SK-N-SH (cell line): ENCODE measurements at regions of chr5 and their contacts with region 1.

Region 1: DNA sequence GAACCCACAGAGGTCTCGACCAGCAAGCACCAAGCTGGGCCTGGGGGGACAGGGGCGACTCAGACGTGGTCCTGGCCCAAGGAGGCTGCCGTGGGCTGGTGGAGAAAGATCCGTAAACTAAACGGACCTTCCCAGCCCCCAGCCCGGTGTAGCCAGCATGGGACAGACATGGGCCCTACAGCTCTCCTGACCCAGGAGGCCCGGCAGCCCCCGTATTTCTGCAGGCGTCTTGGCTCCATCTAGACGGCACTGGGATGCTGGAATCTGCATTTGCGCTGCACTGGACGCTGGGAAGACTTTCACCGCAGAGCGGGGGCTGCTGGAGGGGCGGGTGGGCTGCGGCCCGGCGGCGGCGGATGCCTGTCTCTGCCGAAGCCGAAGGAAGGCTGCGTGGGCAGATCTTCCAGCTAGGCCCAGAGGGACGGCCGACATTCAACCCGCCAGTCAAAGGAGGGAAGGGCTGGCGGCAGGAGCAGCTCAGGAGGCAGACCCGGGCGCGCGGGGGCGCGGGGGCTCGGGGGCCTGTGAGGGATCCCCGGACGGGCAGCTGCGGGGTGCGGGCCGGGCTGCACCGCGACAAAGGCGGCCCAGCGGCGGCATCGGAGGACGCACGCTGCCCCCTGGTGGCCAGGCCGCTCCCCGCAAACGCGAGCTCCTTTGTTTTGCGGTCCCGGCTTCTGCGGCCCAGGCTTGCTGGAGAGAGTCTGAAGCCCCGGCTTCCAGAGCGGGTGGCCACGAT is 266.2 kb downstream of the NSG2 start:
- DNase-seq: peak; percentile 95
- H3K4me3 ChIP-seq: peak overlapping the region; percentile 39 to 62
- H3K27ac ChIP-seq: peak overlapping the region in 1 of 2 experiments; percentile 84; a peak in 2 of 4 replicates
- H3K4me1 ChIP-seq: peaks cover 0 to 38% of the 10 kb centered on the region in 2 experiments; a peak in 1 of 4 replicates
- H3K27me3 ChIP-seq: no peaks in the 10 kb centered on the region
- CTCF ChIP-seq: peak; percentile 77
- EP300 ChIP-seq: no peak; a peak in 1 of 4 replicates
- RAD21 ChIP-seq: peak; percentile 88

Region 2: DNA sequence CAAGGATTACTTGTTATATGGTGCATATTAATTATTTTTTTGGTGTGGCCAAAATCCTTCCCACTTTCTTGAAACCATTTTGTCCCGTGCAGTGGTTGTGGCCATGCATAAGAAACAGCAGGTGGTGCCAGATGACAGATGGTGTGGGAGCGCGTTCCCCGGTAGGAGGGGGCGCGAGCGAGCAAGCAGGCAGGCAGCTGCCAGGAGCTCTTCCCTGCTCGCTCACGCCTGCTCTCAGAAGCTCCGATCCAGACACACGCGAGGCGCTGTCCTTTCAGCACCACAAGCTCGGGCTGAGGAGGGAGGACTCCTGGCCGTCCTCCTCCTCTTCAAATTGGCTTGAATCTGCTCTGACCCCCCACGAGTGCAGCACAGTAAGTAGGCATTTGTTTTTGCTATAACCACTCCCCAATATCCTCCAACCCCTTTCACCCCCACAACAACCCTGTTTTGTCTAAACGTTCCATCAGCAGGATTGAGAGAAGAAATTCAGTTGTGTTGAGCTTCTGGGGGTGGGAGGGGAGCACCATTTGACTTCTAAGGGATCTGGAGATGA is 266.2 kb before region 1 on chr5 and contains the start of gene NSG2:
- CTCF ChIA-PET with region 1: interaction called, 298 read pairs
- POLR2A ChIA-PET with region 1: interaction called, 54 read pairs
- DNase-seq: peak; percentile 85
- H3K4me3 ChIP-seq: peak within 1 kb of the TSS in 1 of 2 experiments; percentile 47; a peak in 2 of 4 replicates
- H3K27ac ChIP-seq: peak within 1 kb of the TSS in 1 of 2 experiments; percentile 94; a peak in 2 of 4 replicates
- H3K4me1 ChIP-seq: peaks cover 0 to 18% of the 10 kb centered on the region in 2 experiments; a peak in 2 of 4 replicates
- H3K27me3 ChIP-seq: no peaks in the 10 kb centered on the region
- CTCF ChIP-seq: peak; percentile 89
- EP300 ChIP-seq: peak in 1 of 2 experiments; percentile 20; a peak in 1 of 4 replicates
- RAD21 ChIP-seq: peak; percentile 99
- polyA plus RNA-seq, gene NSG2: 4.3 and 10.7 TPM in 2 replicates

Region 3: DNA sequence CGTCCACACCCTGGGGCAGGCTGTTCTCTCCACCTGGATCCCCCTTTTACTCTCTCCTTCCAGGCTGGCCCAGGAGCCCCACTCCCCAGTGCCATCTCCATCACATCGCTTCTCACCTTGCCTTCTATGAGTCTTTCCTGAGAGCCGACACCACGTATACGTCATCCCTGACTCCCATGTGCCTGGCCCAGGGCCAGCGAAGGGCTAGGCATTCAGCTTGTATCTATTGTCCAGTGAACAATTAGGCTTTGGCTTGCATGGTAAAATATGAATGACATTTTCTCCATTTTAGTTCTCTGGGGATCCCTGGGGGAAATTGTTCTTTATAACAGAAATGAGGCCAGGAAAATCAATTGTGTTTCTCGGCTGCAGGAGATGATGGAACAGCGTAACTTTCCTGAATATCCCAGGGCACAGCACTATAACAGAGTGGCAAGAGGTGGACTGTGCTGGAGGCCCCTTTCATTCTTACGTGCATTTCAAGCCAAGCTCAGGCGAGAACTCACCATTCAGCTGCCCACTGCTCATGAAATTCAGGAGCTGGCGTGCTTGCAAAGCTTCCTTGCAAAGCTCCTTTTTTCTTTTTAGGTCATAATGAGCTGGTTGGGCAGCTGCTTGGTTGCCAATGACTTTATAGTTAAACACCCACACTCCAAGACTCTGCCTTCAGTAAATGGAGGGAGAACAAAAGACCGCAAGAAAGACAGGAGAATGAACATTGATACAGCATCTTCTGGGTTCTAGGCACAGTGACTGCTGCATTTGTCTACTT is 228.5 kb before region 1 on chr5:
- CTCF ChIA-PET with region 1: interaction called, 41 read pairs
- POLR2A ChIA-PET with region 1: interaction called, 8 read pairs
- DNase-seq: no peak
- H3K4me3 ChIP-seq: no peak overlapping the region
- H3K27ac ChIP-seq: peak overlapping the region; percentile 65 to 100; a peak in 3 of 4 replicates
- H3K4me1 ChIP-seq: peaks cover 22 to 49% of the 10 kb centered on the region in 2 experiments
- H3K27me3 ChIP-seq: no peaks in the 10 kb centered on the region
- CTCF ChIP-seq: no peak
- EP300 ChIP-seq: no peak
- RAD21 ChIP-seq: no peak

Region 4: GRCh38 chr5:174159327-174160247 is 152.1 kb before region 1 on chr5:
- CTCF ChIA-PET with region 1: interaction called, 12 read pairs
- POLR2A ChIA-PET with region 1: no interaction called
- DNase-seq: no peak
- H3K4me3 ChIP-seq: no peak overlapping the region
- H3K27ac ChIP-seq: no peak overlapping the region; a peak in 1 of 4 replicates
- H3K4me1 ChIP-seq: no peaks in the 10 kb centered on the region; a peak in 1 of 4 replicates
- H3K27me3 ChIP-seq: no peaks in the 10 kb centered on the region
- CTCF ChIP-seq: no peak
- EP300 ChIP-seq: no peak
- RAD21 ChIP-seq: no peak

Region 5: DNA sequence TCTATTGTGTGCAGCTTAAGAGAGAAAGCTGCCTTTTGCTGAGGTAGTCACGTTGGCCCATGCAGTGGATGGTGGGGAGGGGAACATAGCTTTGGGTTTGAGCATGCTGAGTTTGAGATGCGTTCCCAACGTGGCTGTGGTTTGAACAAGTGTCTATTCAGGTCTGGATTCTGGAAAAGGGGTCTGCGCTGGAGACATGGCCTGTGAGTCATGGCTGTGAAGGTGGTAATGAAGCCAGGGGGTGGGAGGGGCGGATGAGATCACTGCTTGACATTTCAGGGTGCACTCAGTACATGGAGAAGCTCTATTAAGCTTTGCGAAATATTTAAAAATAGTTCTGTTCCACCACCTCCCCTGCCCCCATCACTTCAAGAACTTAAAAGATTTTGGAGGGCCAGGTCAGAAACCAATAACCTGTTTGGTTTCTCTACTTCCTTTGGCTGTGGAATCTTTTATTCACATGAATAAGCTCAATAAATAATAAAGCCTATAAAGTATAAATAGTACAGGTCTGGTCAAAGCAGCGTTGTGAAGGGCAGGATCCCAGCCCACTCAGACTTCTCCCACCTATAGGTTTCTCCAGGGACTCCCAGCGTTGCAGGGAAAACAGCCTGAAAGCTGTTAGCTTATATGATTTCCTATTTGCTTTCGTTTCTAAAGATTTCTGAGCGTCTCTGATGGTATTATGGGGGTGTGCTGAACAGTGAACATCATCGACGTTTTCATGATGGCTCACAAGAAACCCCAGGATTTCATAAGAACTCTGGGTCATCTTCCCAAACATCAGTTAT is 76.3 kb before region 1 on chr5:
- CTCF ChIA-PET with region 1: interaction called, 29 read pairs
- POLR2A ChIA-PET with region 1: no interaction called
- DNase-seq: no peak
- H3K4me3 ChIP-seq: no peak overlapping the region
- H3K27ac ChIP-seq: peak overlapping the region in 1 of 2 experiments; percentile 95; a peak in 2 of 4 replicates
- H3K4me1 ChIP-seq: peaks cover 0 to 33% of the 10 kb centered on the region in 2 experiments; a peak in 2 of 4 replicates
- H3K27me3 ChIP-seq: no peaks in the 10 kb centered on the region
- CTCF ChIP-seq: no peak
- EP300 ChIP-seq: no peak
- RAD21 ChIP-seq: no peak

Region 6: GRCh38 chr5:174327317-174328236 is 15.9 kb after region 1 on chr5:
- CTCF ChIA-PET with region 1: interaction called, 46 read pairs
- POLR2A ChIA-PET with region 1: interaction called, 3 read pairs
- DNase-seq: peak; percentile 77
- H3K4me3 ChIP-seq: no peak overlapping the region; a peak in 1 of 4 replicates
- H3K27ac ChIP-seq: peak overlapping the region in 1 of 2 experiments; percentile 95; a peak in 2 of 4 replicates
- H3K4me1 ChIP-seq: peaks cover 17 to 50% of the 10 kb centered on the region in 2 experiments
- H3K27me3 ChIP-seq: no peaks in the 10 kb centered on the region
- CTCF ChIP-seq: peak; percentile 97
- EP300 ChIP-seq: peak in 1 of 2 experiments; percentile 23; a peak in 1 of 4 replicates
- RAD21 ChIP-seq: peak; percentile 90